ENCODE measurements at regions of chr4 and their contacts with region 1.

Region 1: GRCh38 chr4:162163852-162164759 is at the start of gene FSTL5:
- DNase-seq: peak; percentile 82
- H3K4me3 Mint-ChIP-seq: peak within 1 kb of the TSS; percentile 79
- H3K27ac Mint-ChIP-seq: no peak within 1 kb of the TSS
- H3K4me1 Mint-ChIP-seq: peaks cover 10% of the 10 kb centered on the region
- H3K27me3 Mint-ChIP-seq: no peaks in the 10 kb centered on the region
- CTCF ChIP-seq: no peak
- total RNA-seq, gene FSTL5: not detected in 2 replicates

Region 2: GRCh38 chr4:161320377-161320776 is 843.7 kb before region 1 on chr4:
- CTCF ChIA-PET with region 1: interaction called, 3 read pairs
- POLR2A ChIA-PET with region 1: no interaction called
- intact Hi-C with region 1: loop called (anchors 10 kb)
- DNase-seq: peak; percentile 54
- H3K4me3 Mint-ChIP-seq: no peak overlapping the region
- H3K27ac Mint-ChIP-seq: no peak overlapping the region
- H3K4me1 Mint-ChIP-seq: no peaks in the 10 kb centered on the region
- H3K27me3 Mint-ChIP-seq: no peaks in the 10 kb centered on the region
- CTCF ChIP-seq: peak; percentile 34

Region 3: GRCh38 chr4:161564230-161564834 is 599.8 kb before region 1 on chr4:
- CTCF ChIA-PET with region 1: interaction called, 5 read pairs
- POLR2A ChIA-PET with region 1: interaction called, 5 read pairs
- intact Hi-C with region 1: loop called (anchors 2 kb)
- DNase-seq: peak; percentile 17
- H3K4me3 Mint-ChIP-seq: no peak overlapping the region
- H3K27ac Mint-ChIP-seq: no peak overlapping the region
- H3K4me1 Mint-ChIP-seq: peaks cover 6% of the 10 kb centered on the region
- H3K27me3 Mint-ChIP-seq: no peaks in the 10 kb centered on the region
- CTCF ChIP-seq: peak; percentile 38

Region 4: DNA sequence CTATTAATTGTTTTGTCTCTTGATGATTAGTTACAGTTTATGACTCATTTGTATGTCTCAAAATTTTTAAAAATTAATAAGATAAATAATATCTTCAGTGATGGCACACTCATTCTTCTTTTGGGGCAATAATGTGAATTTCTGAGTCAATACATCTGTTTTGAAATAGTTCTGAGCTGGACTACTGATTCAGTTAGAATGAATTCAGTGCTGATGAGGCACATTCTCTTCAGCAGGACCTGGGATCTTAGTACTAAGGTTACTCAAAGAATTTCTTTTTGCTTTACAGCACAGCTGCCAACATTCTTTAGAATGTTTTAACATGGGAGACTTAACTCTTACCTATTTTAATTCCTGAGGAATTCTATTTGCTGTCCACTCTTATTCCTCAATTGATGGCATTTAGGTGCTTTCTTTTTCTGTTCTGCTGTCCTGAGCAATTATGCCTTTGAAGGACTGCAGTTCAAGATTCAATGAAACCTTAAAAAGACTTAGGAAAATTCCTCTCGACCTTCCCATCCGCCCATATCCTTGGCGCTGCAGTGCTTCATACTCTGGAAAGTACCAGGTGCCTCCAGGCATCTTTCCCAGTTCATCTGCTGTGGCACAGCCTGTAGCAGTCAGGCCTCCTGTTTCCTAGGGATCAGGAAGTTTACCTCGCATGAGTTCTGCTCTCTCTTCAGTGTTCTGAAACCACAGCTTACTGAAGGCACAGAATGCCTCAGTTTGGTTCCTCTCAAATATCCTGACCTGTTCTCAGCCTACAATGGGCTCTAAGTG is 214.0 kb before region 1 on chr4:
- CTCF ChIA-PET with region 1: interaction called, 7 read pairs
- POLR2A ChIA-PET with region 1: no interaction called
- intact Hi-C with region 1: loop called (anchors 10 kb)
- DNase-seq: peak; percentile 10
- H3K4me3 Mint-ChIP-seq: peak overlapping the region; percentile 59
- H3K27ac Mint-ChIP-seq: peak overlapping the region; percentile 88
- H3K4me1 Mint-ChIP-seq: peaks cover 9% of the 10 kb centered on the region
- H3K27me3 Mint-ChIP-seq: no peaks in the 10 kb centered on the region
- CTCF ChIP-seq: no peak

Region 5: DNA sequence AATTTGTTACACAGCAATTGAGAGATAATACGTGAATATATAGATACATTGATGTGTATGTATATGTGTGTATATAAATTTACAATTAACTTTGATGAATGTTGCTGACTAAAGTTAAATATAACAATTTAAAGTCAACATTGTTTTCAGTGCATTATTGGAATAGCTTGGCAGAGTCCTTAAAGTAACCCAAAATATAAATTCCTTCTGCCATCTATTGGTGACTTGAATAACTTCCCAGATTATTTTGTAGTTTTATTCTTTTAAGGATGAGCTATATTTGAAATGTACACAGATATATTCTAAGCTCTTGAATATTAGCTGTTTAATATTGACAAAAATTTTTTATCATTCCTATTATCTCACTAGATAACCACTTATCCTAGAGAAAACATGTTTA is 297.8 kb after region 1 on chr4:
- CTCF ChIA-PET with region 1: interaction called, 4 read pairs
- POLR2A ChIA-PET with region 1: no interaction called
- intact Hi-C with region 1: loop called (anchors 5 kb)
- DNase-seq: peak; percentile 15
- H3K4me3 Mint-ChIP-seq: no peak overlapping the region
- H3K27ac Mint-ChIP-seq: no peak overlapping the region
- H3K4me1 Mint-ChIP-seq: peaks cover under 1% of the 10 kb centered on the region
- H3K27me3 Mint-ChIP-seq: no peaks in the 10 kb centered on the region
- CTCF ChIP-seq: peak; percentile 33

Measured in MCF 10A (cell line).